OCI-LY7 (cell line): ENCODE measurements at regions of chr2 and their contacts with region 1.

Region 1: GRCh38 chr2:100381240-100381639 is 36.2 kb downstream of the CHST10 start:
- DNase-seq: peak; percentile 79
- H3K4me3 ChIP-seq: no peak overlapping the region
- H3K27ac ChIP-seq: no peak overlapping the region
- H3K4me1 ChIP-seq: peaks cover 4% of the 10 kb centered on the region
- CTCF ChIP-seq: peak; percentile 99

Region 2: GRCh38 chr2:100262555-100263320 is 118.5 kb before region 1 on chr2:
- CTCF ChIA-PET with region 1: interaction called, 10 read pairs
- POLR2A ChIA-PET with region 1: interaction called, 4 read pairs
- intact Hi-C with region 1: loop called (anchors 1 kb)
- DNase-seq: peak; percentile 66
- H3K4me3 ChIP-seq: no peak overlapping the region
- H3K27ac ChIP-seq: no peak overlapping the region
- H3K4me1 ChIP-seq: peaks cover 8% of the 10 kb centered on the region
- CTCF ChIP-seq: peak; percentile 97